ENCODE measurements at regions of chr16 and their contacts with region 1.

Region 1: GRCh38 chr16:31873556-31874365 is at the start of gene ZNF267:
- DNase-seq: peak; percentile 84 to 96 (median 93)
- ATAC-seq: peak; percentile 71
- H3K4me3 ChIP-seq: peak within 1 kb of the TSS; percentile 90 to 92
- H3K4me3 Mint-ChIP-seq: peak within 1 kb of the TSS; percentile 96
- H3K27ac ChIP-seq: peak within 1 kb of the TSS; percentile 89 to 92
- H3K27ac Mint-ChIP-seq: peak within 1 kb of the TSS; percentile 96
- H3K4me1 ChIP-seq: peaks cover 64% of the 10 kb centered on the region
- H3K4me1 Mint-ChIP-seq: peaks cover 88% of the 10 kb centered on the region
- H3K27me3 ChIP-seq: no peaks in the 10 kb centered on the region
- H3K27me3 Mint-ChIP-seq: no peaks in the 10 kb centered on the region
- CTCF ChIP-seq: no peak
- total RNA-seq, gene ZNF267: 78.6 to 80.1 TPM

Region 2: GRCh38 chr16:30740364-30741251 is 1133.2 kb before region 1 on chr16:
- CTCF ChIA-PET with region 1: no interaction called
- POLR2A ChIA-PET with region 1: no interaction called
- intact Hi-C with region 1: no loop called
- DNase-seq: no peak
- ATAC-seq: no peak
- H3K4me3 ChIP-seq: no peak overlapping the region
- H3K4me3 Mint-ChIP-seq: no peak overlapping the region
- H3K27ac ChIP-seq: no peak overlapping the region
- H3K27ac Mint-ChIP-seq: peak overlapping the region; percentile 84
- H3K4me1 ChIP-seq: no peaks in the 10 kb centered on the region
- H3K4me1 Mint-ChIP-seq: peaks cover 5% of the 10 kb centered on the region
- H3K27me3 ChIP-seq: no peaks in the 10 kb centered on the region
- H3K27me3 Mint-ChIP-seq: no peaks in the 10 kb centered on the region
- CTCF ChIP-seq: no peak

Region 3: DNA sequence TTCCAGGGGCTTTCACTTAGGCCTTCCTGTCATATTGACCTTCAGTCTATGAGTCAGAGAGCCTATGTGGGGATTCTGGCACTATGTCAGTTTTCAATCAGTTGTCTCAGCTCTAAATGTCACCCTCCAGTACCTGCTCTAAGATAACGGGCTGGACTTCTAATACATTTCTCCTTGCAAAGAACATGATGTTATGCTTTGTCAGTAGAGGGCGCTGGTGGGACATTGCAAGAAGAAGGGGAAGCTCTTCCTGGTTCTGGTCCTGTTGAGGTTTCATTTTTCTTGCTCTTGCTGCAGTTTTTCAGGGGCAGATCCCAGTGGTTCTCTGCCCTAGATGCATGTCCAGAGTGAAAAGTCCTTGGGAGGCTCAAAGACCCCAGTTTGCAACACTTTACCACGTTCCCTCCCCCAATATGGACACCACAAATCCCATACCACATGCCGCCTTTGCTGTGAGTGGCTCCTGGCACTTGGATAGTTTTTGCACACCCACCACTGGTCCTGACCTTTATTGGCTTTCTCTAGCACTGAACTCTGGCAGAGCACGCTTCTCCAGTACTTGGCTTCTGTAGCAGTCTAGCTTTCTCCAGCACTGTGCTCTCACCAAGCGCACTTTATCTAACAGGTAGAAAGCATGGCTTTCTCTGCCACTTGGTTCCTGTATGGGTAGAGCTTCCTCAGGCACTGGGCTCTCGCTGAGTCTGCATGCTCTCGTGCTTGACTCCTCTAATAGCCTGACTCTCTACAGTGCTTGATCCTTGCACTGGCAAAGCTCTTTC is 1028.9 kb before region 1 on chr16:
- CTCF ChIA-PET with region 1: interaction called, 5 read pairs
- POLR2A ChIA-PET with region 1: no interaction called
- intact Hi-C with region 1: loop called in 1 of 2 experiments (anchors 10 kb)
- DNase-seq: peak; percentile 49 to 92 (median 82)
- ATAC-seq: peak; percentile 93
- H3K4me3 ChIP-seq: no peak overlapping the region
- H3K4me3 Mint-ChIP-seq: peak overlapping the region; percentile 57
- H3K27ac ChIP-seq: no peak overlapping the region
- H3K27ac Mint-ChIP-seq: peak overlapping the region; percentile 84
- H3K4me1 ChIP-seq: peaks cover 6% of the 10 kb centered on the region
- H3K4me1 Mint-ChIP-seq: peaks cover 8% of the 10 kb centered on the region
- H3K27me3 ChIP-seq: no peaks in the 10 kb centered on the region
- H3K27me3 Mint-ChIP-seq: no peaks in the 10 kb centered on the region
- CTCF ChIP-seq: peak; percentile 80

Region 4: DNA sequence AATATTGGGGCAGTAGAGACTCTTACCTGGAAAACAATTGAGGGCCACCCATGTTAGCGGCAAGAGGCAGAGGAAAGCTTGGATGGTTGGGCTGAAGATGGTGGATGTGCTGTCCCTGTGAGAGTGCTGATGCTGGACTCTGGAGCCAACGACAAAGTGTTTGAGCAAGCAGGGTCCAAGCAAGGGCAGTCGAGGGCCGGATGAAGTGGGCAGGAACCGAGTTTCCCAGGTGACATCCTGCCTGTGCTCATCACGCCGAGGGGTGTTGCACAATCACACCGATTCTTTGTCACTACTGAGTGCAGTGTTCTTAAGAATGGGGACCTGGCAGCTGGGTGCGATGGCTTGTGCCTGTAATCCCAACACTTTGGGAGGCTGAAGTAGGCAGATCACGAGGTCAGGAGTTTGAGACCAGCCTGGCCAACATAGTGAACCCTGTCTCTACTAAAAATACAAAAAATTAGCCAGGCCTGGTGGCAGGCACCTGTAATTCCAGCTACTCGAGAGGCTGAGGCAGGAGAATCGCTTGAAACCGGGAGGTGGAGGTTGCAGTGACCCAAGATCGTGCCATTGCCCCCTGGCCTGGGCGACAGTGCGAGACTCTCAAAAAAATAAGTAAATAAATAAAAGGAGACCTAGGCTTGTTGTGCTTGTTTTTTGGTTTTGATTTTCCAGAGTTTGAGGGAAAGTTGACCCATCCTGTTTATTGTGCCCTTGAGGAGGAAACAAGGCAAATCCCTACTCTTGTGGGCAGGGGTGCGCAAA is 677.3 kb before region 1 on chr16:
- CTCF ChIA-PET with region 1: no interaction called
- POLR2A ChIA-PET with region 1: no interaction called
- intact Hi-C with region 1: loop called in 1 of 2 experiments (anchors 10 kb)
- DNase-seq: peak in 1 of 9 experiments; percentile 16
- ATAC-seq: no peak
- H3K4me3 ChIP-seq: no peak overlapping the region
- H3K4me3 Mint-ChIP-seq: no peak overlapping the region
- H3K27ac ChIP-seq: no peak overlapping the region
- H3K27ac Mint-ChIP-seq: peak overlapping the region; percentile 27
- H3K4me1 ChIP-seq: peaks cover 36% of the 10 kb centered on the region
- H3K4me1 Mint-ChIP-seq: peaks cover 59% of the 10 kb centered on the region
- H3K27me3 ChIP-seq: no peaks in the 10 kb centered on the region
- H3K27me3 Mint-ChIP-seq: no peaks in the 10 kb centered on the region
- CTCF ChIP-seq: no peak

Region 5: GRCh38 chr16:31472709-31473203 is 401.0 kb before region 1 on chr16:
- CTCF ChIA-PET with region 1: interaction called, 7 read pairs
- POLR2A ChIA-PET with region 1: no interaction called
- intact Hi-C with region 1: loop called in 1 of 2 experiments (anchors 10 kb)
- DNase-seq: peak in 4 of 9 experiments; percentile 52 to 58 (median 55)
- ATAC-seq: peak; percentile 37
- H3K4me3 ChIP-seq: no peak overlapping the region
- H3K4me3 Mint-ChIP-seq: peak overlapping the region; percentile 77
- H3K27ac ChIP-seq: no peak overlapping the region
- H3K27ac Mint-ChIP-seq: no peak overlapping the region
- H3K4me1 ChIP-seq: peaks cover 18% of the 10 kb centered on the region
- H3K4me1 Mint-ChIP-seq: peaks cover 19% of the 10 kb centered on the region
- H3K27me3 ChIP-seq: peaks cover 4 to 9% of the 10 kb centered on the region in 2 experiments
- H3K27me3 Mint-ChIP-seq: peaks cover 19% of the 10 kb centered on the region
- CTCF ChIP-seq: no peak

Region 6: GRCh38 chr16:31695667-31696066 is 178.1 kb before region 1 on chr16:
- CTCF ChIA-PET with region 1: interaction called, 5 read pairs
- POLR2A ChIA-PET with region 1: interaction called, 6 read pairs
- intact Hi-C with region 1: loop called (anchors 1 to 2 kb)
- DNase-seq: peak in 8 of 9 experiments; percentile 25 to 91 (median 60)
- ATAC-seq: peak; percentile 84
- H3K4me3 ChIP-seq: no peak overlapping the region
- H3K4me3 Mint-ChIP-seq: no peak overlapping the region
- H3K27ac ChIP-seq: peak overlapping the region; percentile 36 to 64
- H3K27ac Mint-ChIP-seq: no peak overlapping the region
- H3K4me1 ChIP-seq: peaks cover 23% of the 10 kb centered on the region
- H3K4me1 Mint-ChIP-seq: peaks cover 10% of the 10 kb centered on the region
- H3K27me3 ChIP-seq: no peaks in the 10 kb centered on the region
- H3K27me3 Mint-ChIP-seq: no peaks in the 10 kb centered on the region
- CTCF ChIP-seq: no peak

Region 7: DNA sequence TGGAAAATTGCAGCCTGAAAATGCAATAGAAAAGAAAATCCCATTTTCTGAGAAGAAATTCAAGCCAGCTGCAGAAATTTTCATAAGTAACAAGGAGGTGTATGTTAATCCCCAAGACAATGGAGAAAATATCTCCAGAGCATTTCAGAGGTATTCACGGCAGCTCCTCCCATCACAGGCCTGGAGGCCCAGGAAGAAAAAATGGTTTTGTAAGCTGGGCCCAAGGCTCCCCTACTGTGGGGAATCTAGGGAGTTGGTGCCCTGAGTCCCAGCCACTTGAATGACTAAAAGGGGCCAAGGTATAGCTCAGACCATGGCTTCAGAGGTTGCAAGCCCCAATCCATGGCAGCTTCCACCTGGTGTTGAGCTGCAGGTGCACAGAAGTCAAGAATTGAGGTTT is 93.4 kb before region 1 on chr16:
- CTCF ChIA-PET with region 1: no interaction called
- POLR2A ChIA-PET with region 1: no interaction called
- intact Hi-C with region 1: no loop called
- DNase-seq: no peak
- ATAC-seq: no peak
- H3K4me3 ChIP-seq: no peak overlapping the region
- H3K4me3 Mint-ChIP-seq: no peak overlapping the region
- H3K27ac ChIP-seq: no peak overlapping the region
- H3K27ac Mint-ChIP-seq: no peak overlapping the region
- H3K4me1 ChIP-seq: no peaks in the 10 kb centered on the region
- H3K4me1 Mint-ChIP-seq: no peaks in the 10 kb centered on the region
- H3K27me3 ChIP-seq: no peaks in the 10 kb centered on the region
- H3K27me3 Mint-ChIP-seq: no peaks in the 10 kb centered on the region
- CTCF ChIP-seq: no peak

Region 8: GRCh38 chr16:31819386-31819785 is 54.4 kb before region 1 on chr16:
- CTCF ChIA-PET with region 1: no interaction called
- POLR2A ChIA-PET with region 1: no interaction called
- intact Hi-C with region 1: no loop called
- DNase-seq: peak in 1 of 9 experiments; percentile 2
- ATAC-seq: no peak
- H3K4me3 ChIP-seq: no peak overlapping the region
- H3K4me3 Mint-ChIP-seq: no peak overlapping the region
- H3K27ac ChIP-seq: no peak overlapping the region
- H3K27ac Mint-ChIP-seq: no peak overlapping the region
- H3K4me1 ChIP-seq: no peaks in the 10 kb centered on the region
- H3K4me1 Mint-ChIP-seq: no peaks in the 10 kb centered on the region
- H3K27me3 ChIP-seq: peaks cover 0 to 1% of the 10 kb centered on the region in 2 experiments
- H3K27me3 Mint-ChIP-seq: peaks cover 29% of the 10 kb centered on the region
- CTCF ChIP-seq: no peak

Region 9: GRCh38 chr16:31833047-31833446 is 40.7 kb before region 1 on chr16:
- CTCF ChIA-PET with region 1: no interaction called
- POLR2A ChIA-PET with region 1: no interaction called
- intact Hi-C with region 1: no loop called
- DNase-seq: no peak
- ATAC-seq: no peak
- H3K4me3 ChIP-seq: no peak overlapping the region
- H3K4me3 Mint-ChIP-seq: no peak overlapping the region
- H3K27ac ChIP-seq: no peak overlapping the region
- H3K27ac Mint-ChIP-seq: no peak overlapping the region
- H3K4me1 ChIP-seq: no peaks in the 10 kb centered on the region
- H3K4me1 Mint-ChIP-seq: no peaks in the 10 kb centered on the region
- H3K27me3 ChIP-seq: no peaks in the 10 kb centered on the region
- H3K27me3 Mint-ChIP-seq: no peaks in the 10 kb centered on the region
- CTCF ChIP-seq: no peak

Region 10: DNA sequence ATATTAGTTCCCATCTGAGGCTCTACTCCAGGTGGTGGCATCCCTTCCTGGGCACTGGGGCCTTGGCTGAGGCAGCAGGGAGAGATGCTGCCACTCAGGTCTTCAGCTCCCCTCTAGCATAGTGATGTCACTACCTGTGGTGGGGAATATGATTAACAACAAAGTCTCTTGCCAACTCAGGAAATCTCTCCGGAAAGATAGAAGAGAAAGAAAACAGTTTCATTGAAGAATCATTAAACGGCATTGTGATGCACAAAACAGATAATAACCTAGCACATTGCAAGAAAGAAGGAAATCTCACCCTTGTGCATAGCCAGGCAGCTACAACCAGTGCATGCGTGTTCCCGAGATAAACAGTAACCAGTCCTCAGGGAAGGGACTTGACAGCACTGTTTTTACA is 12.3 kb before region 1 on chr16:
- CTCF ChIA-PET with region 1: interaction called, 56 read pairs
- POLR2A ChIA-PET with region 1: no interaction called
- intact Hi-C with region 1: loop called (anchors 1 kb)
- DNase-seq: peak in 2 of 9 experiments; percentile 32 to 57
- ATAC-seq: peak; percentile 82
- H3K4me3 ChIP-seq: no peak overlapping the region
- H3K4me3 Mint-ChIP-seq: no peak overlapping the region
- H3K27ac ChIP-seq: peak overlapping the region; percentile 4 to 27
- H3K27ac Mint-ChIP-seq: peak overlapping the region; percentile 81
- H3K4me1 ChIP-seq: peaks cover 18% of the 10 kb centered on the region
- H3K4me1 Mint-ChIP-seq: peaks cover 20% of the 10 kb centered on the region
- H3K27me3 ChIP-seq: no peaks in the 10 kb centered on the region
- H3K27me3 Mint-ChIP-seq: no peaks in the 10 kb centered on the region
- CTCF ChIP-seq: no peak